Breast epithelium (tissue), 4 donors: ENCODE measurements at regions of chr3 and their contacts with region 1.

Region 1: GRCh38 chr3:60365360-60365759 is 885.9 kb downstream of the FHIT start:
- DNase-seq: no peak
- H3K4me3 ChIP-seq: no peak overlapping the region
- H3K27ac ChIP-seq: no peak overlapping the region
- H3K4me1 ChIP-seq: no peaks in the 10 kb centered on the region
- H3K27me3 ChIP-seq: no peaks in the 10 kb centered on the region
- CTCF ChIP-seq: no peak
- POLR2A ChIP-seq: no peak

Region 2: GRCh38 chr3:60313951-60314461 is 51.4 kb before region 1 on chr3:
- intact Hi-C with region 1: loop called (anchors 5 kb)
- DNase-seq: no peak
- H3K4me3 ChIP-seq: no peak overlapping the region
- H3K27ac ChIP-seq: no peak overlapping the region
- H3K4me1 ChIP-seq: no peaks in the 10 kb centered on the region
- H3K27me3 ChIP-seq: no peaks in the 10 kb centered on the region
- CTCF ChIP-seq: no peak
- POLR2A ChIP-seq: no peak

Region 3: DNA sequence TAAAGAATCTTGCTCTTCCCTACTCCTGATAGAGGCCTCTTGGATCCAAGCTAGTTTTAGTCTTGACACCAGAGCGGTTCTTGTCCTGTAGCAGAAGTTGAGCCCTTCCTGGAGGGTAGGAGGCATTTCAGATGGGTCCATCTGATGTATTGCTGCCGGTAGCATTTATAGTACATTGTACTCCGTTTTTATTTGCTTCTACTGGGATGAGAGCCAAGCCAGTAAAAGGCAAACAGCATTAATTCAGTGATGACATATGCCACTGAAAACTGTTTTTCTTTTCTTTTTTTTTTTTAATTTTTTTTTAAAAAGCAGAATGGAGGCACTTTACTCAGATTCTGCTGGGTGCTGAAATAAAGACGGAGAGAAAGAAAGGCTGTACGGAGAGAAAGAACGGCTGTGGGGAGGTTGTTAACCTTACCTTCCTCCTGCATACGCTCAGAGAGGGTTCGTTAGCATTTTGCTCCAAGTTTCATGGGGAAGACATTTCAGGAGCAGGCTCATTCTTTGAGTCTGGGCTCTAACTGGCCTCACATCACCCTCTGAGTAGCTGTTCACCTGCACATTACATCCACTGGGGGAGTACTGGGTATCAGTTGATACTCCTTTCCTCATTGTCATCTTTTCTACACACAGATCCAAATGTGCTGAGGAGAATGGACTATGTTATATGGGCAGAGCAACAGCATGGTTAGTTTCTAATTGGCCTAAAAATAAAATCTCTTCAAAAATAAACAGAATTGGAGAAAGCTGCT is 1846.5 kb after region 1 on chr3:
- intact Hi-C with region 1: no loop called
- DNase-seq: no peak
- H3K4me3 ChIP-seq: no peak overlapping the region
- H3K27ac ChIP-seq: no peak overlapping the region
- H3K4me1 ChIP-seq: no peaks in the 10 kb centered on the region
- H3K27me3 ChIP-seq: no peaks in the 10 kb centered on the region
- CTCF ChIP-seq: no peak
- POLR2A ChIP-seq: no peak